HEK293T (cell line): ENCODE measurements at regions of chr12 and their contacts with region 1.

Region 1: GRCh38 chr12:22544038-22544979 is at the start of gene C2CD5:
- DNase-seq: peak; percentile 91

Region 2: DNA sequence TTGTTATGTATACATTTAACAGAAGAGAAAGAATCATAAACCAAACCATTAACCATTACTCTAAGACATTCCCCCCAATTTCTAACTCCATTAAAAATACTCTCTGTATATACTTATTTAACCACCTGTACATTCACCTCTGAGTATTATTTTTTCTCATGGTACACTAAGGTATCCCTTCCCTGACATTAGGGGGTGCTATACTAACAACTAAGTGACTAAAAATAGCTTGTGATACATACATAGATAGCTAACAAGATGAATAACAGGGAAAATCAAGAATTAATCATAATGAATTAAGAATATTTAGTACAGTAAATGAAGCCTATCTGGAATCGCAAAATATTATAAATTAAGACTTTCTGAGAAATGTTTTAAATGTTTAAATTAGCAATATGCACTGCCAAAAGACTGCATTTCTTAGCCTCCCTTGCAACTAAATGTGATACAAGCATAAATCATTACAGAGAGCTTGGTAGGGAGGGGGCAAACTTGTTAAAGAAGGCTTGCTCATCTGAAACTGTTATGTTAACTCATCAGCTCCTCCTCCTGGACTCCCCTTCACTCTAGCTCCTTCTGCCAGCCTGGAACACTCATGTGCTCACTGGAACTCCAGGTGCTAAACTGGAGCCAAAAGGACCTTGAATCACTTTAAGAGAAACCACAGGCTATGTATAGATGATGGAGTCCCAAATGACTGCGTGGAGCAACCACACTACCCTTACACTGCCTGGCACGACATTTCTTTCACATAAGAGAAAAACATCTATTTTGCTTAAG is 14.8 kb before region 1 on chr12:
- CTCF ChIA-PET with region 1: interaction called, 3 read pairs
- POLR2A ChIA-PET with region 1: interaction called, 12 read pairs
- DNase-seq: no peak

Region 3: DNA sequence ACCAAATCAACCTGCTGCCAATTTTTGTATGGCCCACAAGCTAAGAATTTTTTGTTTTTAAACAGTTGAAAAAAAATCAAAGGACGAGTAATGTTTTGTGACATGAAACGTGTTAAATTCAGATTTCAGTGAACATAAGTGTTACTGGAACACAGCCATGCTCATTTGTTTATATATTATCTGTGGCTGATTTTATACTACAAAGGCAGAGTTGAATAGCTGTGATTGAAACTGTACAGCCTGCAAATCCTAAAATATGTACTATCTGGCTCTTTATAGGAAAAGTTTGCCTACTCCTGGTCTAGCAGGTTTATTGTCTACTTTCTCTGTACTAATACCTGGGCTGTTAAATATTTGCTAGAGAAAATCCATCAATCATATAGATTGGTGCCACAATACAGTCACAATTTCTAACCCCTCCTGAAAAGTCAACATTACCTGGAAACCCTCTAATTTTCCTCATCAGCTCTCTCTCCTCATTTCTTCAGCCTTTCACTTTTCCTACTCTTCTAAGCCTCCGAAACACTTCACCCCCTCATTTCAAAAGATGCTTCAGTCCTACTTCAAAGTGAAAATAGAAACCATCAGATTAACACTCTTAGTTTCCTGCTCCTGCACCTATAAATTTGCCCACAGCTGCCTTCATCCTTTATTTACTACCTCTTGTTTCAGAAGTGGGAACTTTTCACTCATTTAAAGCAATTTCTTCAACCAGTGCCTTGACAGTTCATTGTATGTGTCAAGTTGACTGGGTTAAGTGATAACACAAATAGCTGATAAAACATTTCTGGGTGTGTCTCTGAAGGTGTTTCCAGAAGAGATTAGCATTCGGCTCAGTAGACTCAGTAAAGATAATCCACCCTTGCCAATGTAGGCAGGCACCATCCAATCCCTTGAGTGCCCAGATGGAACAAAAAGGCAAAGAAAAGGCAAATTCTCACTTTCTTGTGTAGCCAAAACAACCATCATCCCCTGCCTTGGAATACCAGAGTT is 18.0 kb after region 1 on chr12:
- CTCF ChIA-PET with region 1: no interaction called
- POLR2A ChIA-PET with region 1: no interaction called
- DNase-seq: no peak